ENCODE measurements at regions of chr1 and their contacts with region 1.

Region 1: DNA sequence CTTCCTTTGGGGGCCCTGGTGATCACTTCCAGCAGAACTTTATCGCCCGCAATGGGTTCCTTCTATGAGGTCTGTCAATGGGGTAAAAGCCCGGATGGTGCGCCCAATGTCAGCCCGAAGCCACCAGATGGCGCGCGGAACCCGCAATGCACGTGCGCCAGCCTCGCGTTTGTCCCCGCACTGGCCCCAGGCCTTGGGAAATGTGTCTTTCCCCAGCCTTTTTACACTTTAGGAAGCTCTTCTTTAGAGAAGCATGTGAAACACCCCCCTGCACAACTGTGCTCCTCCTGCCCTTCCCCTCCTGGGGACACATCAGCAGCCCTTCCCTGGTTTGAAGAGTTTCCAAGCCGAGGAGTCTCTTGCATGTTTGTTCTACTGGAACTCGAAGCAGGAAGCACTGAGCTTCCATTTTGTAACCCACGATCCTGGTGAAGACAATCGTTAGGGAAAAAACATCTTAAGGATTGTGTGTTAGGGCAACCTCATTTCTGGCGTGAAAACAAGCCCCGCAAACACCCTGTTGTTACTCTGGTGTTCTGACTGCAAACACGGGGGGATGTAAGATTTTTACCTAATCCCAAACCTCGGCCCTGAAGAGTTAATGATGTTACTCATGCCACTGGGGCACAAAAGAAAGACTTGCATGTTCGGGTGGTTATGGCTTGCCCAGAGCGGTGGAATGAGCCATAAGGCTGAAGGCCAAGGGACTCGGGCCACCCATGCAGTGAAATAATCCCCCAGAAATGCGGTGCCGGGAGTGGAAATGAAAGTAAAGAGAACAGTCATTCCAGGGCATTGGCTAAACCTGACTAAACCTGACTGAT is 20.4 kb upstream of the TARBP1 start:
- DNase-seq: peak; percentile 89 to 92
- H3K4me3 ChIP-seq: no peak overlapping the region
- H3K27ac ChIP-seq: peak overlapping the region; percentile 56 to 77 (median 63)
- H3K4me1 ChIP-seq: peaks cover 7 to 35% of the 10 kb centered on the region in 2 donors
- H3K27me3 ChIP-seq: no peaks in the 10 kb centered on the region
- CTCF ChIP-seq: peak; percentile 90 to 97 (median 96)
- POLR2A ChIP-seq: no peak

Region 2: GRCh38 chr1:234599617-234600417 is 100.5 kb after region 1 on chr1:
- intact Hi-C with region 1: loop called (anchors 10 kb)
- DNase-seq: peak; percentile 88 to 90
- H3K4me3 ChIP-seq: peak overlapping the region in 2 of 3 donors; percentile 28 to 42
- H3K27ac ChIP-seq: peak overlapping the region; percentile 99 to 100 (median 100)
- H3K4me1 ChIP-seq: peaks cover 49% of the 10 kb centered on the region in 2 donors
- H3K27me3 ChIP-seq: no peaks in the 10 kb centered on the region
- CTCF ChIP-seq: no peak
- POLR2A ChIP-seq: peak; percentile 55 to 95

Region 3: DNA sequence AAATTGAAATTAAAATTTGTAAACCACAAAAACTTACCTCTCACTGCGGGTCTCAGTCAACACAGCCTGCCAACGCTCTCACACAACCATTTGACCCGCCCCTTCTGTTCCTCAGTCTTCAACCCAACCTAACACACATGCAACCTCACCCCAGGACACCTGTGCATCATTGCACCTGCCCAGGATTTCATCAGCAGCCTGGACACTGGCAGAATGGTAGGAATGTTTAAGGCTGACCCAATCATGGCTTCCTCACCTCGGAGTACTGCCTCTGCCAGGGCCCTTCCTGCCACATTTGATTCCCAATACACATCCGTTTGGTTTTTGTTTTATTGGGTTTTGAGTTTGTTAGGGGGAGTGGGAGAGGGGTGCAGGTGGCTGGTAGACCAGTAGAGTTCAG is 588.6 kb after region 1 on chr1:
- intact Hi-C with region 1: loop called (anchors 5 kb)
- DNase-seq: no peak
- H3K4me3 ChIP-seq: no peak overlapping the region
- H3K27ac ChIP-seq: no peak overlapping the region
- H3K4me1 ChIP-seq: peaks cover 14 to 17% of the 10 kb centered on the region in 2 donors
- H3K27me3 ChIP-seq: no peaks in the 10 kb centered on the region
- CTCF ChIP-seq: no peak
- POLR2A ChIP-seq: no peak

Measured in thyroid gland (tissue), 4 donors.